ENCODE measurements at regions of chr16 and their contacts with region 1.

Region 1: DNA sequence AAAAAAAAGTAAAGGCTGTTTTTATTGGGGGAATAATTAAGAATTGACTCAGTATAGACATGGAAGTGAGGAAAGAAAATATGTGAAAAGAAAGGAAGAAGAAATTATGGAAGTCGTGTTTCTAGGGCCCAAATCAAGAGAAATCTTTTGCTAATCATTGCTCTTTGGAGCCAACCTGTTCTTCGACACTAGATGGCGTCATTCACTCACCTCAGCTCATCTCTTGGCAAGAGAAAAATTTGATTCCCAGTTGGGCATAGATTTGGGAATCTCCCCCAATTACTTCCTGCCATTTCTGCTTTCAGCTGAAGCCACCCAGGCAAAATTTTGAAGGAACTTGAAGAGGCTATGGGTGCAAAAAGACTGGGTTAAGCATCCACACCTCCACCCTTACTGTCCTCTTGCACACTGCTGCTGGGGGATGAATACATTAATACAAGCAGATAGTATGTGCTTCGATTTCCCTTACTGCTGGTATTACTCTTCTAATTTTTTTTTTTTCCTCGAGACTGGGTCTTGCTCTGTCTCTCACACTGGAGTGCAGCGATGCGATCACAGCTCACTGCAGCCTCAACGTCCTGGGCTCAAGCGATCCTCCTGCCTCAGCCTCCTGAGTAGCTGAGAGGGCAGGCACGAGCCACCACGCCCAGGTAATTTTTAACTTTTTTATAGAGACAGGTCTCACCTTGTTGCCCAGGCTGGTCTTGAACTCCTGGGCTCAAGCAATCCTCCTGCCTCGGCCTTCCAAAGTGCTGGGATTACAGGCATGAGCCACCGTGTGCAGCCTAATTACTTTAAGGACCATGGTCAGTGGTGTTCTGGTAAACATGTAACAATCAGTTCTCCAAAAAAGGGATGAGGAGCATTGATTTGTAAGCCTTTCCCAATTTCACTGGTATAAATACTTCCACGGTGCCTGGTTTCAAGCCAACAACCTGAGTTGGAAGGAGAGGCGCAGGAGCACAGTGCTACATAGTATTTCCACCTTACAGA is 13.5 kb downstream of the PSMD7 start:
- DNase-seq: peak; percentile 66
- H3K4me3 ChIP-seq: no peak overlapping the region; a peak in 1 of 4 replicates
- H3K27ac ChIP-seq: no peak overlapping the region
- H3K4me1 ChIP-seq: no peaks in the 10 kb centered on the region
- H3K27me3 ChIP-seq: no peaks in the 10 kb centered on the region
- CTCF ChIP-seq: peak; percentile 84
- EP300 ChIP-seq: no peak
- RAD21 ChIP-seq: peak; percentile 92

Region 2: DNA sequence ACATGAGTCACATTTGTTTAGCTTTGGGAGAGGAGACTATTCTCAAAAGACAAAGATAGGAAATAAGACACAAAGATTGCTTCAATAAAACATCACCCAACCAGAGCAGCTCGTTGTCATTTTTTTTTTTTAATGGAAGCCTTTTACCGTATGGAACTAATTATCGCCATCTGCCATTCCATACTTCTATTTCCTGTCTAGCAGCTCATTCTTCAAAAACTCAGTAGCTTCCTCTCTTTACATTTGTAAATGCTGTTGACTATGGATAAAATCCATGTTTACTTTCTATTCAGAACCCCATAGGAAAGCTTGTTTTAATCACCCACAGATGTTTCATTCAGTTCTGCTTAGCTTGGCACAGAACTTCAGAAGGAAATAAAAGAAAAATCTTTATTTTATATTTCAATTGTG is 123.5 kb before region 1 on chr16:
- CTCF ChIA-PET with region 1: no interaction called
- POLR2A ChIA-PET with region 1: no interaction called
- DNase-seq: peak; percentile 33
- H3K4me3 ChIP-seq: no peak overlapping the region; a peak in 1 of 4 replicates
- H3K27ac ChIP-seq: peak overlapping the region in 1 of 2 experiments; percentile 93; a peak in 2 of 4 replicates
- H3K4me1 ChIP-seq: peaks cover 0 to 12% of the 10 kb centered on the region in 2 experiments; a peak in 3 of 4 replicates
- H3K27me3 ChIP-seq: no peaks in the 10 kb centered on the region
- CTCF ChIP-seq: no peak
- EP300 ChIP-seq: no peak; a peak in 1 of 4 replicates
- RAD21 ChIP-seq: no peak

Region 3: GRCh38 chr16:74296432-74297144 is 13.5 kb before region 1 on chr16 and contains the start of gene PSMD7:
- CTCF ChIA-PET with region 1: interaction called, 14 read pairs
- POLR2A ChIA-PET with region 1: interaction called, 8 read pairs
- DNase-seq: peak; percentile 92
- H3K4me3 ChIP-seq: peak within 1 kb of the TSS; percentile 83 to 87
- H3K27ac ChIP-seq: peak within 1 kb of the TSS; percentile 85 to 91
- H3K4me1 ChIP-seq: peaks cover 6 to 12% of the 10 kb centered on the region in 2 experiments
- H3K27me3 ChIP-seq: no peaks in the 10 kb centered on the region
- CTCF ChIP-seq: no peak
- EP300 ChIP-seq: no peak
- RAD21 ChIP-seq: no peak
- polyA plus RNA-seq, gene PSMD7: 133 and 142 TPM in 2 replicates

Region 4: GRCh38 chr16:74320707-74321106 is 10.6 kb after region 1 on chr16:
- CTCF ChIA-PET with region 1: interaction called, 18 read pairs
- POLR2A ChIA-PET with region 1: no interaction called
- DNase-seq: no peak
- H3K4me3 ChIP-seq: no peak overlapping the region
- H3K27ac ChIP-seq: peak overlapping the region in 1 of 2 experiments; percentile 4; a peak in 1 of 4 replicates
- H3K4me1 ChIP-seq: peaks cover 0 to 4% of the 10 kb centered on the region in 2 experiments; a peak in 1 of 4 replicates
- H3K27me3 ChIP-seq: no peaks in the 10 kb centered on the region
- CTCF ChIP-seq: no peak
- EP300 ChIP-seq: no peak
- RAD21 ChIP-seq: no peak

Region 5: GRCh38 chr16:74431516-74431915 is 121.4 kb after region 1 on chr16:
- CTCF ChIA-PET with region 1: interaction called, 10 read pairs
- POLR2A ChIA-PET with region 1: no interaction called
- DNase-seq: no peak
- H3K4me3 ChIP-seq: no peak overlapping the region
- H3K27ac ChIP-seq: no peak overlapping the region
- H3K4me1 ChIP-seq: no peaks in the 10 kb centered on the region; a peak in 1 of 4 replicates
- H3K27me3 ChIP-seq: no peaks in the 10 kb centered on the region
- CTCF ChIP-seq: no peak
- EP300 ChIP-seq: no peak
- RAD21 ChIP-seq: no peak